ENCODE measurements at regions of chr12 and their contacts with region 1.

Region 1: GRCh38 chr12:80186727-80187217 is 87.4 kb downstream of the OTOGL start:
- DNase-seq: peak; percentile 85
- ATAC-seq: peak; percentile 88
- H3K4me3 ChIP-seq: no peak overlapping the region
- H3K27ac ChIP-seq: no peak overlapping the region
- H3K4me1 ChIP-seq: peaks cover 12 to 20% of the 10 kb centered on the region in 2 experiments; a peak in 3 of 4 replicates
- H3K27me3 ChIP-seq: no peaks in the 10 kb centered on the region
- CTCF ChIP-seq: peak; percentile 65 to 86 (median 74)
- POLR2A ChIP-seq: no peak
- RAD21 ChIP-seq: peak; percentile 88

Region 2: DNA sequence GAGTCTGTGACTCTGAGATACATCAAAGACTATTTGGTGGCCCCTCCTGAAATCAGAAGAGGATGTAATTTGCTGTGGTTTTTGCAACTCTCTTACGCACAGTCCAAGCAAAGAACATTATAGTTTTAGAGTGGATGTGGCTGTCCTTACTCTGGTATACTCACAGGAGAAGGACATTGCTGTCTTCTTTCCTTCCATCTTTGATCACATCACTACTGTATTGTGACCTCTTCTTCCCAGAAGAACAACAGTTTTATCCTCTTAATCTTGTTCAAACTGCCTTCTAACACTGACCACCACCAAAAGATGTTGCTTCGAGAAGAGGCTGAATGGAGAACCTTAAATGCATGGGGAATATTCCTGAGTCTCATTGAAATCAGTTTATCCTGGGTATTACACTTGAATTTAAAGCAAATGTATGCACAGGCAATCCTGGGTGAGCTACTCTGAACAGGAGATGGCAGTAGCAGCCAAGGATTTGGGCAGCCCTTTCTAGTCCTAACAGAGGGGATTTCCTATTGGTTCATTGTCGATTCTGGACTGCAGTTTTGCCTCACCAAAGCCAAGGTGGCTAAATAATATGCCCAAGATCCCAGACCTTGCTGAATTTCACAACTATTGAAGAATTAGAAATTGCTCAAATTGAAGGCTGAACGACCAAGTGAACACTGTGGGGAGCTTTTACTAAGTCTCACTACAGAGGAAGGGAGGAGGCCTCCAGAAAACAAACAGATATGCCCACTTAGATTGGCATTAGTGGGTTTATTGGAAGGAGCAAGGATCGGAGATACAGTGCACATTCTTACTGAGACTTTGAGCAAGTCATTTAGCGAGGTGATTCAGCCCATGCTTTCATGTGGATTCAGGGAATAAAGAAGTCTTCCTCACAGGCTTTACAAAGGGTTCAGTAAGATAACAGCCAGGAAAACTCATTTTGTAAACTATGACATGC is 778.8 kb before region 1 on chr12:
- CTCF ChIA-PET with region 1: no interaction called
- POLR2A ChIA-PET with region 1: no interaction called
- RAD21 ChIA-PET with region 1: no interaction called
- intact Hi-C with region 1: loop called (anchors 5 kb)
- DNase-seq: peak; percentile 63
- ATAC-seq: peak; percentile 99
- H3K4me3 ChIP-seq: no peak overlapping the region
- H3K27ac ChIP-seq: no peak overlapping the region
- H3K4me1 ChIP-seq: no peaks in the 10 kb centered on the region
- H3K27me3 ChIP-seq: no peaks in the 10 kb centered on the region
- CTCF ChIP-seq: peak; percentile 54 to 79 (median 60); a peak in 5 of 6 replicates
- POLR2A ChIP-seq: no peak
- RAD21 ChIP-seq: peak; percentile 83

Region 3: GRCh38 chr12:79420146-79420618 is 766.6 kb before region 1 on chr12:
- CTCF ChIA-PET with region 1: interaction called, 7 read pairs
- POLR2A ChIA-PET with region 1: no interaction called
- RAD21 ChIA-PET with region 1: no interaction called
- intact Hi-C with region 1: loop called (anchors 2 kb)
- DNase-seq: peak; percentile 45
- ATAC-seq: peak; percentile 88
- H3K4me3 ChIP-seq: no peak overlapping the region
- H3K27ac ChIP-seq: no peak overlapping the region
- H3K4me1 ChIP-seq: peaks cover 6 to 26% of the 10 kb centered on the region in 2 experiments; a peak in 3 of 4 replicates
- H3K27me3 ChIP-seq: no peaks in the 10 kb centered on the region
- CTCF ChIP-seq: peak; percentile 48 to 69 (median 53); a peak in 5 of 6 replicates
- POLR2A ChIP-seq: no peak
- RAD21 ChIP-seq: peak; percentile 78

Region 4: GRCh38 chr12:79555028-79555930 is 631.5 kb before region 1 on chr12:
- CTCF ChIA-PET with region 1: no interaction called
- POLR2A ChIA-PET with region 1: no interaction called
- RAD21 ChIA-PET with region 1: no interaction called
- intact Hi-C with region 1: loop called (anchors 1 kb)
- DNase-seq: peak; percentile 26
- ATAC-seq: no peak
- H3K4me3 ChIP-seq: no peak overlapping the region
- H3K27ac ChIP-seq: no peak overlapping the region
- H3K4me1 ChIP-seq: no peaks in the 10 kb centered on the region; a peak in 1 of 4 replicates
- H3K27me3 ChIP-seq: no peaks in the 10 kb centered on the region
- CTCF ChIP-seq: peak; percentile 50 to 68 (median 66); a peak in 5 of 6 replicates
- POLR2A ChIP-seq: no peak
- RAD21 ChIP-seq: peak; percentile 85

Region 5: GRCh38 chr12:79826267-79827128 is 360.3 kb before region 1 on chr12:
- CTCF ChIA-PET with region 1: no interaction called
- POLR2A ChIA-PET with region 1: no interaction called
- RAD21 ChIA-PET with region 1: no interaction called
- intact Hi-C with region 1: no loop called
- DNase-seq: no peak
- ATAC-seq: no peak
- H3K4me3 ChIP-seq: no peak overlapping the region
- H3K27ac ChIP-seq: no peak overlapping the region
- H3K4me1 ChIP-seq: no peaks in the 10 kb centered on the region
- H3K27me3 ChIP-seq: no peaks in the 10 kb centered on the region
- CTCF ChIP-seq: no peak
- POLR2A ChIP-seq: no peak
- RAD21 ChIP-seq: no peak

Region 6: DNA sequence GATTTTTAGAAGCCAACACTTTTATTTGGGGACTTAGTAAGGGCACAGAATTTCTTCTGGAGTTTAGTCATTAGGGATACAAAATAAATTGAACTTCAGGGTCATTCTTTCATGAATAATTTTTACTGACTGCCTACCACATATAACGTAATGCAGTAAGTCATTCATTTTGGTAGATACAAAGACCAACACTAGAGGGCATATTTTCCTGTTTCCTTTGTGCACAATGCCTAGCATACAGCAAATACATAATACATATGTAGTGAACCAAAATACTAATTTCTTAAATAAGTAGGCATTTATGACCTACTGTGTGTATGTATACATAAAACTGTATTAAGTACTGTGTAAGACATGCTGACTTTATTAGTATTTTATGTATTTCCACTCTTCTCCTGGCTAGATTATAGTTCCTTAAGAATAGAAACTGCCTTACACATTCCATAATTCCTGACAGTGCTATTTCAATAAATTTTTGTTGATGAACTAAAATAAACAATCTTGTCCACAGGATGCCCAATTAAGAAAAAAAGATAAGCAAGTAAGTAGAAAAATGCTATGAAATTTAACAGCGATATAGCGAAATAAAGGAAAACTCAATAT is 299.8 kb before region 1 on chr12:
- CTCF ChIA-PET with region 1: interaction called, 4 read pairs
- POLR2A ChIA-PET with region 1: no interaction called
- RAD21 ChIA-PET with region 1: no interaction called
- intact Hi-C with region 1: loop called (anchors 1 kb)
- DNase-seq: peak; percentile 41
- ATAC-seq: peak; percentile 92
- H3K4me3 ChIP-seq: no peak overlapping the region
- H3K27ac ChIP-seq: no peak overlapping the region
- H3K4me1 ChIP-seq: no peaks in the 10 kb centered on the region
- H3K27me3 ChIP-seq: no peaks in the 10 kb centered on the region
- CTCF ChIP-seq: peak; percentile 40 to 73 (median 64); a peak in 5 of 6 replicates
- POLR2A ChIP-seq: no peak
- RAD21 ChIP-seq: peak; percentile 48

Region 7: GRCh38 chr12:79945433-79945832 is 241.3 kb before region 1 on chr12:
- CTCF ChIA-PET with region 1: no interaction called
- POLR2A ChIA-PET with region 1: no interaction called
- RAD21 ChIA-PET with region 1: no interaction called
- intact Hi-C with region 1: no loop called
- DNase-seq: no peak
- ATAC-seq: no peak
- H3K4me3 ChIP-seq: no peak overlapping the region
- H3K27ac ChIP-seq: no peak overlapping the region
- H3K4me1 ChIP-seq: no peaks in the 10 kb centered on the region
- H3K27me3 ChIP-seq: no peaks in the 10 kb centered on the region
- CTCF ChIP-seq: no peak
- POLR2A ChIP-seq: no peak
- RAD21 ChIP-seq: no peak

Region 8: DNA sequence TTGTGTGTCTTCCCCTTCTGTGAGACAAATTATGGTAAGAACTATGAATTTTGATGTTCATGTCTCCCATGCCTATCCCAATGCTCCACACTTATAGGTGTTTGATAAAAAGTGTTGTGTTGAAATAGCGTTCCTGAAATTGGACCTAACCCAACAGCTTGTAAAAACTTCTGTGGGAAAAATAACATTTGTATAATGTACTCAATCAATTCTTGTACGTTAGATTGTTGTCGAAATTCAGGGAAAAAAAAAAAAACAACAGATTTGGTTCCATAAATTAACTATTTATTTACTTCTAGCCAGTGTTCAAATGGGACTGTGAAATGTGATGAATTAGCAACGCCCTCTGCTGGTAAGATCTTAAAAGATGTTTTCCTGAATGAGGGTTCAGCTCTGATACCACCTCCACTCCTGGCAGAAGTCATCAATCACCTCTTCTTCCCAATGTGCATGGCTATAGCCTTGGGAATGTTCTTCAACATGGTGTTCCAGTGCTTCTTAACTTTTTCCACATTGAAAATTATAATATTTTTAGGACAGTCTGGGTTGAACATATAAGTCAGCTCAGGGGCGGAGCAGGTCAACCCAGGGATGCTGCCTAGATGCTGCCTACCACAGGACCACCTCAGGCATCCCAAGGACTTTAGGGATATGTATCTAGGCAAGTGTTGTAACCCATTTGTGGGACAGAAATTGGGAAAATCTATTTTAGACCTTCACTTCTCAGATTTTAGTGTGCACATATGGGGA is 83.2 kb after region 1 on chr12:
- CTCF ChIA-PET with region 1: interaction called, 13 read pairs
- POLR2A ChIA-PET with region 1: no interaction called
- RAD21 ChIA-PET with region 1: interaction called in 1 of 2 experiments, 5 read pairs
- intact Hi-C with region 1: no loop called
- DNase-seq: peak; percentile 23
- ATAC-seq: peak; percentile 70
- H3K4me3 ChIP-seq: no peak overlapping the region
- H3K27ac ChIP-seq: no peak overlapping the region
- H3K4me1 ChIP-seq: peaks cover 9 to 17% of the 10 kb centered on the region in 2 experiments
- H3K27me3 ChIP-seq: no peaks in the 10 kb centered on the region
- CTCF ChIP-seq: peak; percentile 48 to 74 (median 59); a peak in 5 of 6 replicates
- POLR2A ChIP-seq: no peak
- RAD21 ChIP-seq: peak; percentile 74

Region 9: DNA sequence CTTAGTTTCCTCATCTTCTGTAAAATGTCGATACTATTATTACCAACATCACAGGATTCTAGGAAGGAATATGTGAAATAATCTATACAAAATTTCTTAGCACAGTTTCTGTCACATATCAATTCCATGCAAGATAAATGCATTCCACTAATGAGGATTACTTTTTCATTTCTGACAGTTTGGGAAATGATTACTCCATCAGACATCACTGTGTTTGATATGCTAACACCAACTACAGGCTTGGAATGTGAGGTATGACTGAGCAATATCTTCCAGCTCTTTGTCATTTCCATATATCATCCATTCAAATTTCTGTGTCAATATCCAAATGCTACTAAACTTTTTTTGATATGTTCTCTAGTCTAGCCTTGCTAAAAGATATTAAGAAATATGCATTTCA is 146.1 kb after region 1 on chr12:
- CTCF ChIA-PET with region 1: no interaction called
- POLR2A ChIA-PET with region 1: no interaction called
- RAD21 ChIA-PET with region 1: no interaction called
- intact Hi-C with region 1: no loop called
- DNase-seq: no peak
- ATAC-seq: no peak
- H3K4me3 ChIP-seq: no peak overlapping the region
- H3K27ac ChIP-seq: no peak overlapping the region
- H3K4me1 ChIP-seq: no peaks in the 10 kb centered on the region
- H3K27me3 ChIP-seq: no peaks in the 10 kb centered on the region
- CTCF ChIP-seq: no peak
- POLR2A ChIP-seq: no peak
- RAD21 ChIP-seq: no peak

Measured in HCT116 (cell line).